A673 (cell line): ENCODE measurements at regions of chr6 and their contacts with region 1.

Region 1: DNA sequence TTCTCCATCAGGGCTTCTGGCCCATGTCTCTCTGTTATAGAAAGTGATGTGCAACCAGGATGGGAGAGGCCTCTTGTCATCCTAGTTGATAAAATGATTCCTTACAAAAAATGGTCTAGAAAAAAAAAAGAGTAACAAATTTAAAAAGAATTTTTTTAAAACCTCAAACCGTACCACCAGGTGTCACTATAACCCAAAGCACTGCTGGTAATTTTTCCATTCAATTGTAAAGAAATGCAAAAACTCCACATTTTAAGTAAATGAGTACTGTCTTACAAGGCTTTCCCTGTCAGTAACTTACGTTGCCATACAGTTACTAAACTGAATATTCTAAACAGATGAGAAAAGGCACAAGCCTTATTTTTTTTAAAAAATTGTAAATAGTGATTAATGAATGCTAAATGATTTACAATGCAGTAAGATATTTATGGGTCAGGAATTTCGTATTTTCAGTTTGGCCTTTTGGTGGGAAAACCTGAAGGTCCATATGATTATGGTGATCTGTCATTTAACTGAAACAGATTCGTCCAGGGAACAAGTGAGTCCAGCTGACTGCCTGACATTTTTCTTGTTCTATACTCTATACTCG is 95.4 kb downstream of the OGFRL1 start:
- DNase-seq: peak; percentile 71
- H3K4me3 ChIP-seq: no peak overlapping the region
- H3K27ac ChIP-seq: no peak overlapping the region
- H3K4me1 ChIP-seq: peaks cover 18% of the 10 kb centered on the region
- H3K27me3 ChIP-seq: no peaks in the 10 kb centered on the region
- CTCF ChIP-seq: peak; percentile 66

Region 2: DNA sequence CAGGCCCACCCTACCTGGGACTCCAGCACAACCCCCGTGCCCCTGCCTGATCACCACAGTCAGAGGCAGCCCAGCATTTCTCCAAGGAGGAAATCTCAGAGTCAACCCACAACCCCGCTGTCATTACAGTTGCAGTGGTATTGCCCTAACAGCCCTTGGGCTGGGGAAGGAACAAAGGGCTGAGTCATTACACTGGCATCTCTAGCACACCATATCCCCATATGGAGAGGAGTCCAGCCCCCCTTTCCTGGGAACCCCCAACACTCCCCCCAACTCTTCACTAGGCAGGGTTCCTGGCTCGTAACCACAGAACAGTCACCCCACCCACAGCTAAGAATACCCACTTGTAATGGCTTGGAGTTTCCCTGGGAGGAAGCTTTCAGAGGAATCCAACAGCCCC is 244.7 kb before region 1 on chr6:
- CTCF ChIA-PET with region 1: no interaction called
- POLR2A ChIA-PET with region 1: no interaction called
- intact Hi-C with region 1: no loop called
- DNase-seq: no peak
- H3K4me3 ChIP-seq: no peak overlapping the region
- H3K27ac ChIP-seq: no peak overlapping the region
- H3K4me1 ChIP-seq: no peaks in the 10 kb centered on the region
- H3K27me3 ChIP-seq: peaks cover 13% of the 10 kb centered on the region
- CTCF ChIP-seq: no peak

Region 3: DNA sequence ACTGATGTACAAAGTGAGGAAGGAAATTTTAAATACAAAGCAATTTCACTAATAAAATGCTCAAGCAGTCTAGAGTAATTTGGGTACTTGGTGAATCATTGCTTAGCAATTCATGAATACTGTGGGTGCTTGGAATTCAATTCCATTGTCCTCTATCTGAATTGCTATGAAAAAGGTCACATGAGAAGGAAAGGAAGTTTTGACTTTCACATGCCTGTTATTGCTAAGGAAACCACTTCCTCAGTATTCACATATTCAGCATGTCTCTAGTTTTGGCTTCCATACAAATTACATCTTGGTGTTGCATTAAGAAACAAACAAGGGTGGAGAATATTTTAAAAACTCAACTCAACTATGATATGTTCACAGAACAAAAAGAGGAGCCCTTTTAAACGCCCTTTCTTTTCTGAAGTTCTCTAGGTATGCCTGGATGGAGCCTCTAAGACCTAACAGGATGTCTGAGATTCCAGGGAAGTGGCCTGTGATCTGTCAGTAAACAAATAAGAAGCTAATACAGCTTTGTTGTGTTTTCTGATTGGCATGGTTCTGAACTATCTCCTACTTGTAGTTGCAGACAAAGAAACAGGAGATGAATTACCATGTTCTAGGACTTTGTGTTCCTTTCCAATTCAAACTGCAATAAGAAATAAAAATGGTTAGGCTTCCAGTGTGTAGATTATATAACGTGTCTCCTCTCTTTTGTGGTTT is 95.0 kb after region 1 on chr6:
- CTCF ChIA-PET with region 1: no interaction called
- POLR2A ChIA-PET with region 1: no interaction called
- intact Hi-C with region 1: loop called (anchors 1 kb)
- DNase-seq: peak; percentile 90
- H3K4me3 ChIP-seq: no peak overlapping the region
- H3K27ac ChIP-seq: peak overlapping the region; percentile 41
- H3K4me1 ChIP-seq: peaks cover 25% of the 10 kb centered on the region
- H3K27me3 ChIP-seq: no peaks in the 10 kb centered on the region
- CTCF ChIP-seq: no peak

Region 4: DNA sequence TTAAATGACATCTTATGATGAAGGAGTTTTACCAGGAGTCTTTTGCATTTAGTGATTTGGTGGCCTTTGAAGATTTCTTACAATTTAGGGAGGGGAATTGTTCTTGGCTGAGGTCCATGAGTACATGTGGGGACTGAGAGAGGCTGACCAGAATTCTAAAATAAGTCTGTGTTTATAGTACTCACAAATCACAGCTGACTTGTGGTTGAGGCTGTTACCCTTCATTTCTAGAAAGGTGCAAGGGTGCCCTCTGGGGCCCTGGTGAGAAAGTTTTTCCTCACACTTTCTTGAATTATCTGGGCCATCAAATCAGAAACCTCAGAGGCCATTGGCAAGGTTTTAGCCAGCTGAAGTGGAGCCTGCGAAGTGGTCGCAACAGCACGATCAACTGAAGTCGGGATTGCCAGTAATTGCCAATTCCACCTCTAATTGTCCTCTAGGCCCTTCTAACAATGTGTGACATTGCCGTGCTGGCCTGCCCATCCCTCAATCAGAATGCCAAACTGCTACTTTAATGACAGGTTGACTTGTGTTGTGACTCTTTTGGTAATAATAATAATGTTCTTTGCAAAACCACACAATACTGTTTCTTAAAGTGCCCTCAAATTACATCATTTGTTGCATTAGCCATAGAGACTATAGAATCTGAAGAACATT is 126.2 kb after region 1 on chr6:
- CTCF ChIA-PET with region 1: interaction called, 3 read pairs
- POLR2A ChIA-PET with region 1: no interaction called
- intact Hi-C with region 1: loop called (anchors 1 kb)
- DNase-seq: peak; percentile 61
- H3K4me3 ChIP-seq: no peak overlapping the region
- H3K27ac ChIP-seq: no peak overlapping the region
- H3K4me1 ChIP-seq: no peaks in the 10 kb centered on the region
- H3K27me3 ChIP-seq: no peaks in the 10 kb centered on the region
- CTCF ChIP-seq: peak; percentile 50; the same call in 1 of the 2 replicates

Region 5: GRCh38 chr6:71551798-71552197 is 167.8 kb after region 1 on chr6:
- CTCF ChIA-PET with region 1: no interaction called
- POLR2A ChIA-PET with region 1: no interaction called
- intact Hi-C with region 1: no loop called
- DNase-seq: no peak
- H3K4me3 ChIP-seq: no peak overlapping the region
- H3K27ac ChIP-seq: no peak overlapping the region
- H3K4me1 ChIP-seq: no peaks in the 10 kb centered on the region
- H3K27me3 ChIP-seq: no peaks in the 10 kb centered on the region
- CTCF ChIP-seq: no peak